H1 (cell line): ENCODE measurements at regions of chr12 and their contacts with region 1.

Region 1: DNA sequence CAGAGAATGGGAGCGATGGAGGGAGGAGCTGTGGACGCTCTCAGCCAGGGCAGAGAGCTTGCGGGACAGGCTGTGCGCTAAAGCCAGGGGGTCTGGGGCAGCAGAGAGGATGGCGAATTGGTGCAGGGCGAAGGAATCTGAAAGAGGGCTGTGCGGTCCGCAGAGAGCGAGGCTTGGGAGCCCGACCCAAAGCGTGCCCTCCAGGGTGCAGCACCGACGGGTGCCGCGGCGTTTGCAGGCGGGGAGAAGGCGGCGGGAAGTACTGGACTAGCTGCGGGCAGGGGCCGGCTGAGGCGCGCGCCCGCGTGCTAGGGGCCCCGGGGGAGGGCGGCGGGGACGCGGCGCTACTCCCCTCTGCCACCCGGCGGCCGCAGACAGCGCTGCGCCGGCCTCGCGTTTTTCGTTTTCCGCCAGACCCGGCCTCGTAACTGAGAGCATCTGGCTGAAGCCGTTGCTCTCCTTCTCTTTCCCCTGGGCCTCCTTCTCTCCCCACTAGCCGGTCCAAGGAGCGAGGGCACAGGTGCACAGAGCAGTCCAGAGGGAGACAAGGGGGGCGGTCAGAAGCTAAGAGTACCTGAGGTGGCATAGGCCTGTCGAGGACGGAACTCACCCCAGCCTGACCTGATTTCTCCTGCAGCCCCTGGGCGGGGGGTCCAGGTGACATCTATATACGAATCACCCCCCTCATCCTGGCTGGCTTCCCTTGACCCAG is 24.9 kb downstream of the SLC6A12 start:
- DNase-seq: peak in 1 of 2 experiments; percentile 87
- H3K4me3 ChIP-seq: peak overlapping the region; percentile 42 to 73 (median 58)
- H3K27ac ChIP-seq: no peak overlapping the region
- H3K4me1 ChIP-seq: peaks cover 0 to 3% (median 2%) of the 10 kb centered on the region in 4 experiments; a peak in 2 of 7 replicates
- H3K27me3 ChIP-seq: peaks cover 0 to 15% (median 5%) of the 10 kb centered on the region in 4 experiments; a peak in 5 of 7 replicates
- CTCF ChIP-seq: peak; percentile 83 to 86 (median 84)
- EP300 ChIP-seq: no peak
- POLR2A ChIP-seq: no peak
- RAD21 ChIP-seq: peak; percentile 41 to 70; a peak in 3 of 4 replicates

Region 2: DNA sequence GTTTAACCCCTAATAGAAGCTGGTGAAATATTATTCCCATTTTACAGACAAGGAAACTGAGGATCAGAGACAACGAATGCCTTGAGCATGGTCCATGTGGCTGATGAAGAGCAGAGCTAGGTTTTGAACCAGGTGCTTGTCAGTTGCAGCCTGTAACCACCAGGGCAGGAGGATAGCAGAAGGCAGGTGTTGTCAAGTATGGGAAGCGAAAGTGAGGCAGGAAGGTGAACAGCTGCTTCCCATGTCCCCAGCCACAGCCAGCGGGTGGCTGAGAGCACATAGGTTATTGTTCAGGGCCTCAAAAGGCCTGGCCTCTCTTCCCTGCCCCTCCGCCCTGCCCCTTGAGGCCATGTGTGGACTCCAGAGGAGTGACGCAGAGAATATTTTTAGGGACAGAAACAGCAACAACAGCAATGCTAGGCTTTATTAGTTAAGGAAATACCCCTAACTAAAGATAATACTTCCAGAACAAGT is 82.9 kb before region 1 on chr12:
- CTCF ChIA-PET with region 1: interaction called, 20 read pairs
- POLR2A ChIA-PET with region 1: interaction called, 3 read pairs
- DNase-seq: no peak
- H3K4me3 ChIP-seq: no peak overlapping the region
- H3K27ac ChIP-seq: no peak overlapping the region
- H3K4me1 ChIP-seq: peaks cover 0 to 17% (median 9%) of the 10 kb centered on the region in 4 experiments; a peak in 6 of 7 replicates
- H3K27me3 ChIP-seq: no peaks in the 10 kb centered on the region; a peak in 1 of 7 replicates
- CTCF ChIP-seq: peak; percentile 44 to 79 (median 58)
- EP300 ChIP-seq: no peak
- POLR2A ChIP-seq: no peak
- RAD21 ChIP-seq: peak; percentile 54 to 56

Region 3: DNA sequence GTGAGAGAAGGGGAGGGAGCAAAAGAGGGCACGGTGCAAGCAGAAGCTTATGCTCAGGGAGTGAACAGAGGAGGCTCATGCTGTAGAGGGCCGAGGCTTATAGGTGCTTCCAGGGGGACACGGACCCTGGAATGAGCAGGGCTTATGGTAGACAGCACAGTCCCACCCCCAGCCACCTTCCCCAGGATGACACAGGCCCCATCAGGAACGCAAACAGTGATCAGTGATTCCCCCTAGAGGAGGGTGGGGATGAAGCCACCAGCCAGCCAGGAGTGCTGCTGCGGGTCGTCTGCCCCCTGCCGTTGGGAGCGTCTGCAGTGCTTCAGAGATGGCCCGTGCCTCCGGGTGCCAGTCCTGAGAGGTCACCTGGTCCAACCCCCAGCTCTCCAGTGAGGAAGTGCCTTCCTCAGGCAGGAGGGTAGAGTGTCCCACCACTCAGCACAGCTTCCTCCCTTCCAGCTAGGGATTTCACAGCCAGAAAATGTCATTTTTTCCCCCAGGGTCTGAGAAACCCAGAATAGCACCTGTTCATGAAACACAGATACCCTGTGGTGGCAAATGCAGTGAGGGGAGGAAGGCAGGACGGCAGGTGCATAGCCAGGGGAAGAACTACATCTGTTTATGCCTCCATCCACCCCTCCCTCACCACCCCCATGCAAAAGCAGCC is 35.9 kb before region 1 on chr12:
- CTCF ChIA-PET with region 1: interaction called, 13 read pairs
- POLR2A ChIA-PET with region 1: no interaction called
- DNase-seq: peak; percentile 70 to 89
- H3K4me3 ChIP-seq: peak overlapping the region in 1 of 4 experiments; percentile 29; a peak in 1 of 8 replicates
- H3K27ac ChIP-seq: no peak overlapping the region
- H3K4me1 ChIP-seq: peaks cover 0 to 11% (median 2%) of the 10 kb centered on the region in 4 experiments; a peak in 5 of 7 replicates
- H3K27me3 ChIP-seq: no peaks in the 10 kb centered on the region
- CTCF ChIP-seq: peak; percentile 99
- EP300 ChIP-seq: no peak
- POLR2A ChIP-seq: no peak
- RAD21 ChIP-seq: peak; percentile 82 to 88

Region 4: GRCh38 chr12:169528-170370 is 19.3 kb before region 1 on chr12:
- CTCF ChIA-PET with region 1: interaction called, 63 read pairs
- POLR2A ChIA-PET with region 1: interaction called, 6 read pairs
- DNase-seq: no peak
- H3K4me3 ChIP-seq: no peak overlapping the region
- H3K27ac ChIP-seq: no peak overlapping the region
- H3K4me1 ChIP-seq: peaks cover 3 to 28% (median 20%) of the 10 kb centered on the region in 4 experiments
- H3K27me3 ChIP-seq: peaks cover 0 to 3% (median 2%) of the 10 kb centered on the region in 4 experiments; a peak in 2 of 7 replicates
- CTCF ChIP-seq: no peak
- EP300 ChIP-seq: no peak
- POLR2A ChIP-seq: no peak
- RAD21 ChIP-seq: peak in 1 of 2 experiments; percentile 20; a peak in 1 of 4 replicates

Region 5: DNA sequence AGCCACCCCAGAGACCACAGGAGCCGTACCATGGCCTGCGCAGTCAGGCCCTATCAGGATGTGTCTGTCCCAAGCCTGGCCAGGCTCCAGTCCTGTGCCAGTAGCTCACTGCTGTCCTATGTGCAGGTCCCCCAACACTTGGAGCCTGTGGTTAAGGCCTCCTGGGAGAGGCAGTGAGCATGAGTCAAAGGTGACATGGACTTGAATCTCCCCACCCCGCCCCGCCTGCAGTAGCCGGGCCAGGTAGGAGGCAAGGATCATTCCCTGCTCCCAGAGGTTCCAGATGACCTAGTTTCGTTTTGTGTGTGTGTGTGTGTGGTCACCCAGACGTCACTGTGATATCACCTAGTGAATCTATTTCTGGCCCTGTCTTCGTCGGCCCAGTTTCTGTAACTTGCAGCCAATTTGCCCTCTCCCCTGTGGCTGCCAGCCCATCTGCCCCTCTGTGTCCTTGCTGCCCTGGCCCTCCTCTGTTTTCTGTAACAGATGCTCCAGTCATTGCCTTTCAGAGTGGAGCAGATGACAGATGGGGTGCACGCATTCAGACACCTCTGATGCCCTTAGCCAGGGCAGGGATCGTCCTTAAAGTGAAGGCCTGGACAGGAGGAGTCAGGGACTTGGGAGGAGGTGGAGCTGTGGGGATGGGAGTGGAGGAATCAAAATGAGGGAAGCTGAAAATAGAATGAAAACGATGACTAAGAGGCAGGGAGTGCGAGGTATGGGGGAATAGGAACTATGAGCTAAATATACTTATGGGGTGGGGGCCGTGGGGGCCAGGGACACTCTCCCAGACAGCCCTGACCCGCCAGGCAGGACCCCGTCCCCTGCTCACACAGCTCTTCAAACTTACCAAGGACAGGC is 12.5 kb before region 1 on chr12:
- CTCF ChIA-PET with region 1: interaction called, 63 read pairs
- POLR2A ChIA-PET with region 1: interaction called, 6 read pairs
- DNase-seq: no peak
- H3K4me3 ChIP-seq: no peak overlapping the region
- H3K27ac ChIP-seq: no peak overlapping the region
- H3K4me1 ChIP-seq: peaks cover 0 to 14% (median 7%) of the 10 kb centered on the region in 4 experiments; a peak in 6 of 7 replicates
- H3K27me3 ChIP-seq: no peaks in the 10 kb centered on the region; a peak in 1 of 7 replicates
- CTCF ChIP-seq: no peak
- EP300 ChIP-seq: no peak
- POLR2A ChIP-seq: no peak
- RAD21 ChIP-seq: no peak

Region 6: GRCh38 chr12:203462-204260 is 14.6 kb after region 1 on chr12:
- CTCF ChIA-PET with region 1: interaction called, 71 read pairs
- POLR2A ChIA-PET with region 1: interaction called, 3 read pairs
- DNase-seq: peak in 1 of 2 experiments; percentile 78
- H3K4me3 ChIP-seq: peak overlapping the region; percentile 55 to 80 (median 62)
- H3K27ac ChIP-seq: no peak overlapping the region
- H3K4me1 ChIP-seq: peaks cover 7 to 18% (median 12%) of the 10 kb centered on the region in 4 experiments
- H3K27me3 ChIP-seq: peaks cover 5 to 51% (median 33%) of the 10 kb centered on the region in 4 experiments
- CTCF ChIP-seq: peak; percentile 13 to 15 (median 14); a peak in 3 of 4 replicates
- EP300 ChIP-seq: no peak
- POLR2A ChIP-seq: no peak
- RAD21 ChIP-seq: no peak

Region 7: GRCh38 chr12:212715-213526 is 23.9 kb after region 1 on chr12:
- CTCF ChIA-PET with region 1: interaction called, 13 read pairs
- POLR2A ChIA-PET with region 1: interaction called, 4 read pairs
- DNase-seq: no peak
- H3K4me3 ChIP-seq: no peak overlapping the region
- H3K27ac ChIP-seq: no peak overlapping the region
- H3K4me1 ChIP-seq: peaks cover 0 to 20% (median 15%) of the 10 kb centered on the region in 4 experiments; a peak in 6 of 7 replicates
- H3K27me3 ChIP-seq: peaks cover 0 to 16% (median 13%) of the 10 kb centered on the region in 4 experiments; a peak in 4 of 7 replicates
- CTCF ChIP-seq: no peak
- EP300 ChIP-seq: no peak
- POLR2A ChIP-seq: no peak
- RAD21 ChIP-seq: no peak